ENCODE measurements at regions of chr18 and their contacts with region 1.

Region 1: DNA sequence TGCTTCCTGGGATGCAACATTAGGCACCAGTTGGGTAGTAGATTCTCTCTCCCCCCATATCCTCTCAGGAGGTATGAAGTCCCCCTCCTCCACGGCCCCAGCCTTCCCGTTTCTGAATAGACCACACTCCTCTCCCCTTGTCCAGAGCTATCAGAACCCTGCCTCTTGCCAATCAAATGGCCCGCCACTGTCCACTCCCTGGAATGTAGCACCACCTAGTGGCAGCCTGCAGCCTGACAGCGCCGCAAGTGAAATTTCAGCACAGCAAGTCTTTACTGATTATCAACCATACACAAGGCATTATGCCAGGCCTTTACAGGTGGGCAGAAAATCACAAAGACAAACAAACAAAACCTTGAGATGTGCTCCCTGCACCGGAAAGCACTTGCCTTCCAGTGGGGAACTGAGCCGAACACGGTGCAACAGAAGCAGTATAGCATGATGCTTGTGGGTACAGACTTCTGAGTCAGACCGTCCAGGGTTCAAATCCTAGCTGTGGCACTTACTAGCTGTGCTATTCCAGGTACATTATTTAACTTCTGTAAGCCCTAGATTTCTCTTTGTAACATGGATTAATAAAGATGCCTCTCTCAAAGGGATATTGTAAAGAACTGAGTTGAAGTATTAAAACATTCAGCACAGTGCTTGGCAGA is 174.0 kb downstream of the SMAD2 start:
- DNase-seq: peak; percentile 67
- CTCF ChIP-seq: peak; percentile 99

Region 2: GRCh38 chr18:47215554-47216138 is 540.8 kb before region 1 on chr18:
- CTCF ChIA-PET with region 1: interaction called, 40 read pairs
- POLR2A ChIA-PET with region 1: no interaction called
- DNase-seq: peak; percentile 13
- CTCF ChIP-seq: peak; percentile 61

Region 3: DNA sequence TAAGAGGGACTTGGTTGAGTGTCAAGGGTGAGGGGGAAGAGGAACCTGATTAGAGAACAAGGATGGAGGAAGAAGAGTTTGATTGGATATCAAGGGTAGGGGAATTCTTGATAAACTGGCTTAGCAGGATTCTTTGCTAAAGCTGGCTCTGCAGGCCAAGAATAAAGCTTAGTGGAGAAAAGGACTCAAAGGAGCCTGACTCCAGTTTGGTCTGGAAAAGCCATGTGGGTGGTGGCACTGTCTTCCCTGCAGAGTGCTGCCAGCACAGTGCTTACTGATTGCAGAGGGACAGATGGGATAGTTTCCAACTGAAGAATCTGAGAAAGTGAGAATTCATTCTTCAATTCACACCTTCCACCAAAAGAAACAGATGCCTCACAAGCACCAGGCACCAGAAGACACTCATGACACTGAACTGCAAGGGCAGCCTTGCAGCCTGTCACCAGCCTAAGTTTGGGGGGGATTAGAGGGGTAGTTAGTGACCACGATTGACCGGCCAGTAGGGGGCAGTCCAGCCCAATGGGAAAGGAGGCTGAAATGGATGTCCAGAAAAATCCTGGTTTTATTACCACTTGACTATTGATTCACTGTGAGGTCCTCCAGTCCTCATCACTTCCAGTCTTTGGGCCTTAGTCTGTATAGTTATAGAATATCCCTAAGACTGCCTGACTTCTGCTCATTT is 160.5 kb before region 1 on chr18:
- CTCF ChIA-PET with region 1: interaction called, 15 read pairs
- POLR2A ChIA-PET with region 1: no interaction called
- DNase-seq: peak; percentile 65
- CTCF ChIP-seq: peak; percentile 70

Region 4: DNA sequence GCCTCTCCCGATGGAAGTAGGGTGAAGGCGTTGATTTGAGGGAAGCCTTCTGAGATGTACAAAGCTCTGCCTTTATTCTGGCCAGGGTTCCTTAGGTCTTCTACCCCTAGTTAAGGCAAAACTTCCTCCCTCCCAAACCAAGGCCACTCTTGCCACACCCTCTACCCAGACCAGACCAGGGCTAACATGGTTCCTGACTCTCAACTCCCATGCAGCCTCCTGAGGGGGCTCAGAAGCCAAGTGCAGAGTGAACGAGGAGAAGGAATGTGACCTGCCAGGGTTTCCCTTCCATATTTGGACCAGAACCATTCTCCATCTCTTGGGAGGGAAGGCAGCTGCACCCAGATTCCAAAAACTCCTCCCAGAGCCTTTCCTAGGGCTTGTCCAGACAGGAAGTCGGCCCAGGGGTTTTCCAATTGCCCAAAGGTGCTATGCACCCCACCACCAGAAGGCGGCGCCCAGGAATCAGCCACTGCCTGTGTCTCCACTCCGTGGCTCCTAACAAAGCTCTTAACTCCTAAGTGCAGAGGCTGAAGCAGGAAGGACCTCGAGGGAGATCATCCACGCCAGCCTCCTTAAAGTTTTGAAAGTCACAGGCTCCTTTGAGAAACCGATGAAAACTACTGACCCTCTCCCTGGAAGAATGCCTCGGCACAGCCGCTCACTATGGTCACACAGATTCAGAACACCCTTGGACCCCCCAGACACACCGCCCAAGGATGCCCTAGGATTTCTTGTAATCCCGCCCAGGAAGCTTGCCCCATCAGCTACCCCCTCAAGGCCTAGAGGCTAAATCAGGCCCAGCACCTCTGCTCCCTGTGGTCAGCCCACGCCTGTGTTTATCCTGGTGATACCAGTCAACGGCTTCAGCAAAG is 16.1 kb after region 1 on chr18:
- CTCF ChIA-PET with region 1: interaction called, 41 read pairs
- POLR2A ChIA-PET with region 1: no interaction called
- DNase-seq: peak; percentile 62
- CTCF ChIP-seq: peak; percentile 98